Caco-2 (cell line): ENCODE measurements at regions of chr4 and their contacts with region 1.

Region 1: DNA sequence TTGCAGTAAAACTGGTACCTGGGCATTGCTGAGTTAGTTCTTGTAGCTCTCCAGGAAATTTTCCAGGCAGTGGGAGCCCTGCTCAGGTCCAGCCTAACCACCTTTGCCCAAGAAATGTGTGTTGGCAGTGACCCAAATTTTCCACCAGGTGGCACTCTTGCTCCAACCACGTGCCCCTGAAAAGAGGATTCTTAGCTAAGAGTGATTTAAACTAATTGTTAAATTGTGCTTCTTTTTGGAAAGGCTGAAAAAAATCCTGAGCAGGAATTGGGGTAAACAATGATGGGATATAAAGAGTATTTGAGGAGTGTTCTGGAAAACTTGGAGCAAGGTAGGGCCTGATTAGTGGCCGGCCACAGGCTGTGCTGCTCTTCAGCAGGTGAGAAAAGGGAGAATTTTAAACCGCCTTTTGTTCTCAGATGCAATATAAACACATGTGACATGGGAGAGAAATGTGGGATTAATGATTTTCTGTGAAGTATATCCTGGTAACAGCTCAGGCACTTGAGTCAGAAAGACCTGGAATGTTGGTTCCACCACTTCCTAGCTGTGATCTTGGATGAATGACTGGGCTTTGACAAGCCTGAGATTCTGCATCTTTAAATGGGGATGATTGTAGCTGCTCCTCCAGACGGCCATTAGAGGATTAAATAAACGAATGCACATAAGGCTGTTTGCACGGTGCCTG is 219.6 kb downstream of the PTTG2 start:
- DNase-seq: peak; percentile 67 to 74
- H3K4me3 ChIP-seq: no peak overlapping the region
- H3K4me3 Mint-ChIP-seq: no peak overlapping the region
- H3K27ac Mint-ChIP-seq: peak overlapping the region; percentile 65
- H3K4me1 ChIP-seq: 0 out of 2 replicates have a peak, but pooled peaks cover 3% of the 10 kb centered on the region
- H3K4me1 Mint-ChIP-seq: peaks cover 7% of the 10 kb centered on the region
- H3K27me3 ChIP-seq: no peaks in the 10 kb centered on the region
- H3K27me3 Mint-ChIP-seq: no peaks in the 10 kb centered on the region
- CTCF ChIP-seq: peak; percentile 76 to 91

Region 2: GRCh38 chr4:38062088-38062893 is 117.5 kb before region 1 on chr4:
- CTCF ChIA-PET with region 1: no interaction called
- POLR2A ChIA-PET with region 1: no interaction called
- intact Hi-C with region 1: loop called (anchors 1 kb)
- DNase-seq: peak; percentile 65 to 75
- H3K4me3 ChIP-seq: no peak overlapping the region
- H3K4me3 Mint-ChIP-seq: no peak overlapping the region
- H3K27ac Mint-ChIP-seq: no peak overlapping the region
- H3K4me1 ChIP-seq: no peaks in the 10 kb centered on the region
- H3K4me1 Mint-ChIP-seq: no peaks in the 10 kb centered on the region
- H3K27me3 ChIP-seq: no peaks in the 10 kb centered on the region
- H3K27me3 Mint-ChIP-seq: no peaks in the 10 kb centered on the region
- CTCF ChIP-seq: peak; percentile 70 to 82

Region 3: DNA sequence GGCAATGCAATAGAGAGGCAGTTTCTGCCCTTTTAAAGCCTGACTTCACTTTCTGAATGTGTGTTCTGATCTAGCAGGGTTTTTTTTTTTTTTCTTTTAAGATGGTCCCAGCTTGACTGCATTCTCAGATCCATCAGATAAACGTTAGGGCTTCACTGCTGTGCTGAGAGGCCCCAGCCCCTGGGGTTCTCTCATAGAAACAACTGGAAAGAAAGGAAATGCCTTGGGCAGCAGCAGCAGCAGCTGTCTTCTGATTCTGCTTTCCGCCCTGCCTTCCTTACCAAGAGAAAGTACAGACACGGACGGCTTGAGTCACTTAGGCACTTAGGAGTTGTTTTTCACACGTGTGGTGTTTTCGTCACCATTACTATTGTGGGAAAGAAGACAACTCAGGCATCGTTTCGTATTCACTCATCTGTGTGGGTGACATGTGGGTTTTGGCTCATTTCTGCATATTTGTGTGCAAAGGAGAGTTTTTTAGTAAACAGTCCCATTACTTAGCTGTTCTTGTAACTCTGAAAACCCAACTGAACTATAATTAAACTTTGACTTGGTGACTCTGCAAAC is 47.6 kb before region 1 on chr4:
- CTCF ChIA-PET with region 1: no interaction called
- POLR2A ChIA-PET with region 1: no interaction called
- intact Hi-C with region 1: loop called (anchors 1 kb)
- DNase-seq: no peak
- H3K4me3 ChIP-seq: no peak overlapping the region
- H3K4me3 Mint-ChIP-seq: no peak overlapping the region
- H3K27ac Mint-ChIP-seq: peak overlapping the region; percentile 1
- H3K4me1 ChIP-seq: peaks cover 40% of the 10 kb centered on the region
- H3K4me1 Mint-ChIP-seq: peaks cover 29% of the 10 kb centered on the region
- H3K27me3 ChIP-seq: no peaks in the 10 kb centered on the region
- H3K27me3 Mint-ChIP-seq: no peaks in the 10 kb centered on the region
- CTCF ChIP-seq: no peak

Region 4: DNA sequence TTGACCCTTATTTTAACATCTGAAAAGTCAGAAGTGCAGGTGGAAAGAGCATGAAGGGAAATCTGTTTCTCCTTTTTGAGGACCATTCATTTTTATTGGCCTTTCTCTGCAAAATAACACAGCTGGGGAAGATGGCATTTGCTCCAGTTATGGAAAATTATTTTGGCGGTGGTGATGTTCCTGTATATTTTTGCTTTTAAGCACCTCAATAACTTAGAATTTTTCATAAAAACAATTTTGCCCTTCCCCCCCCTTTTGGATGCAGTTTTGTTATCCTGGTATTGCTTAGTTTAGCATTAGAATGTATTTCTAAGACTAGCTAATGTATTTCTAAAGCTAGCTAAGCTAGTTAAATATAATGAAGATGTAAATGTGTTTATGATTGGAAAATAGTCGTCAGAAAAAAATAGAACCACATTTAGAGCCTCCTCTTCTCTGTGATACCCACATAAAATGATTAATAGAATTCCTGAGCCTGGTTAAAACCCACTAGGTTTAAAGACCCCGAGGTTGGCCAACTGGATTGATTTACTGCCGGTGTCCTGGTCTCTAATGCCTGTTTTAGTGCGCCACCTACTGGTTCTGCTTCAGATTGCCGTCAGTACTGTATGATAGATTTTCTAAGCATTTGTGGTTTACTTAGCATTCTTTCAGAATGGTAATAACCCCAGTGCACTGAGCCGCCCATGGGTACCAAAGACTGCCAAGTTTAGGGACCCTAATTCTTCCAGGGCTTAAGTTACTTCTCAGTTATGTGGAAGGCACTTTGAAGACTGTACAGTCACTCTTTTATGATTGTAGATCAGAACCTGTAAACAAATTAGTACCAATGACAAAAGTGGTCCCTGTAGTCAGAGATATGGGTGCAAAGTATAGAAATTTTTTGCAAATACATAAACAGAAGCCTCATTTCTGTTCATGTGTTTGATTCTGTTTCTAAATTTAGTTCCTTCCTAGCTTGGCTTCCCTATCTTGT is 495.6 kb after region 1 on chr4:
- CTCF ChIA-PET with region 1: interaction called, 26 read pairs
- POLR2A ChIA-PET with region 1: no interaction called
- intact Hi-C with region 1: loop called (anchors 1 kb)
- DNase-seq: peak; percentile 73 to 79
- H3K4me3 ChIP-seq: no peak overlapping the region
- H3K4me3 Mint-ChIP-seq: peak overlapping the region; percentile 39
- H3K27ac Mint-ChIP-seq: peak overlapping the region; percentile 39
- H3K4me1 ChIP-seq: peaks cover 43% of the 10 kb centered on the region
- H3K4me1 Mint-ChIP-seq: peaks cover 44% of the 10 kb centered on the region
- H3K27me3 ChIP-seq: no peaks in the 10 kb centered on the region
- H3K27me3 Mint-ChIP-seq: no peaks in the 10 kb centered on the region
- CTCF ChIP-seq: peak; percentile 72 to 82

Region 5: GRCh38 chr4:38782452-38783108 is 602.7 kb after region 1 on chr4 and contains the start of gene TLR10:
- CTCF ChIA-PET with region 1: interaction called, 5 read pairs
- POLR2A ChIA-PET with region 1: no interaction called
- intact Hi-C with region 1: loop called (anchors 1 kb)
- DNase-seq: peak in 1 of 2 experiments; percentile 59
- H3K4me3 ChIP-seq: no peak within 1 kb of the TSS
- H3K4me3 Mint-ChIP-seq: no peak within 1 kb of the TSS
- H3K27ac Mint-ChIP-seq: no peak within 1 kb of the TSS
- H3K4me1 ChIP-seq: peaks cover 7% of the 10 kb centered on the region
- H3K4me1 Mint-ChIP-seq: peaks cover under 1% of the 10 kb centered on the region
- H3K27me3 ChIP-seq: no peaks in the 10 kb centered on the region
- H3K27me3 Mint-ChIP-seq: peaks cover 2% of the 10 kb centered on the region
- CTCF ChIP-seq: peak; percentile 50 to 59
- total RNA-seq, gene TLR10: not detected in 2 replicates